ENCODE measurements at regions of chr9 and their contacts with region 1.

Region 1: GRCh38 chr9:22037954-22038690 is 29.0 kb upstream of the CDKN2B start:
- DNase-seq: peak; percentile 57
- H3K4me3 ChIP-seq: no peak overlapping the region
- H3K27ac ChIP-seq: peak overlapping the region; percentile 91
- H3K4me1 ChIP-seq: peaks cover 75% of the 10 kb centered on the region
- H3K27me3 ChIP-seq: no peaks in the 10 kb centered on the region
- CTCF ChIP-seq: peak; percentile 42 to 62

Region 2: DNA sequence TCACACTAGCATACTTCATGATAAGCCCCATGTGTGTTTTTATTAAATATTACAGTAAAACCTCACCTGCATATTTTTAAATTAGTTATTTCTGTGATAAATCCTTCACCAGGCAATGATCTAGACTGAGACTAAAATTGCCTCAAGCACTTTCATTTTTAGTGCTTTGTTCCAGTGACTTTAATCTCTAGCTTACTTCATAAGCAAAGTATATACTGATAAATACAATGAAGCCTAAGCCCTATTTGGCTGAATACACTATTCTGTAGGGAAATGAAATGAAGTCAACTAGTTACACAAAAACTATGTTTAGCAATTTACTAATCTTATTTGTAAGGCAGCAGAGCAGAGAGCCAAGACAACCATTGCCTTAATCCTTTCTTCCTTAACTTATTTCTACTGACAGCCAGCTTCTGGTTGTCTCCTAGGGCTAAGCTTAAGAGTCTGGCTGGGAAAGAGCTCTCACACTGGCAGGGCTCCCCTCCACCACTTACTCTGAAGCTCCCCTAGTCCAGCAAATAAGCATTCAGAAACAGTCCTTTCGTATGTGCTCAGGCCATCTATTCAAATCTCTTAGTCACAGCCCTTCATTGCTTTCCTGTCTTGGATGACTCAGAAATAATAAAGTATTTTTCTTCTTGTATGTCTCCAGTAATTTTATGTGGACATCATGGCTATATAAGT is 267.1 kb before region 1 on chr9:
- CTCF ChIA-PET with region 1: no interaction called
- dilution Hi-C with region 1: no loop called
- in situ Hi-C with region 1: no loop called
- intact Hi-C with region 1: no loop called
- DNase-seq: peak; percentile 83
- H3K4me3 ChIP-seq: no peak overlapping the region
- H3K27ac ChIP-seq: peak overlapping the region; percentile 84
- H3K4me1 ChIP-seq: peaks cover 18% of the 10 kb centered on the region
- H3K27me3 ChIP-seq: no peaks in the 10 kb centered on the region
- CTCF ChIP-seq: no peak

Region 3: GRCh38 chr9:21974548-21975409 is 63.3 kb before region 1 on chr9:
- CTCF ChIA-PET with region 1: no interaction called
- dilution Hi-C with region 1: loop called (anchors 5 kb)
- in situ Hi-C with region 1: no loop called
- intact Hi-C with region 1: no loop called
- DNase-seq: no peak
- H3K4me3 ChIP-seq: peak overlapping the region in 2 of 3 experiments; percentile 3 to 14
- H3K27ac ChIP-seq: no peak overlapping the region
- H3K4me1 ChIP-seq: peaks cover 4% of the 10 kb centered on the region
- H3K27me3 ChIP-seq: no peaks in the 10 kb centered on the region
- CTCF ChIP-seq: no peak

Region 4: GRCh38 chr9:22079873-22080341 is 41.8 kb after region 1 on chr9:
- CTCF ChIA-PET with region 1: no interaction called
- dilution Hi-C with region 1: no loop called
- in situ Hi-C with region 1: no loop called
- intact Hi-C with region 1: loop called (anchors 2 kb)
- DNase-seq: peak; percentile 93
- H3K4me3 ChIP-seq: no peak overlapping the region
- H3K27ac ChIP-seq: peak overlapping the region; percentile 39
- H3K4me1 ChIP-seq: peaks cover 25% of the 10 kb centered on the region
- H3K27me3 ChIP-seq: no peaks in the 10 kb centered on the region
- CTCF ChIP-seq: no peak

Region 5: DNA sequence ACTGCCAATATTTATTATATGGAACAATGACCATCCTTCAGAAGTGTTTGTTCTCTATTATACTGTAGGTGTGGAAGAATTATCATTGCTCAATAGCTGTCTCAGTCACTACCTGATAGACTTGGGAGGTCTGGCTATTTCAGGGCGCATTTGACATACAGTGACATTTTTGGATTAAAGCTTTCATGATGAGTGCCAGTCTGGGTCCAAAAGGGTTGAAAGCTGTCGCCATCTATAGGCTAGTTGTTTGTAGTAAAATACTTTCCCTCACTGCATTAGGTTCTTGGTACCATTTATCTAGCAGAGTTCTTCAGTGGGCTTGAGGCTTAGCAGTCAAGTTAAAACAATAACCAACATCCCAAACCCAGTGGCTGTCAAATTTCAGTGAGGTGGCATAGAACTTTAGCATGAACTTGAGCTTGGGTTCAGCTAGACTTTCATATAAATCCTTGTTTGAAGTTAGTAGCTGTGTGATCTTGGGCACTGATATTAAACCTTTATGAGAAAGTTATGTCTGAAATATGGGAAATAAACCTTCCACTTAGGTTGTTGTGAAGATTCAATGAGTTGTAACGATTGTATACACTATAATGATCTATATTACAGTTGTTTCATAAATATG is 81.5 kb after region 1 on chr9:
- CTCF ChIA-PET with region 1: no interaction called
- dilution Hi-C with region 1: loop called (anchors 5 kb)
- in situ Hi-C with region 1: no loop called
- intact Hi-C with region 1: loop called (anchors 2 kb)
- DNase-seq: peak; percentile 59
- H3K4me3 ChIP-seq: no peak overlapping the region
- H3K27ac ChIP-seq: no peak overlapping the region
- H3K4me1 ChIP-seq: peaks cover 28% of the 10 kb centered on the region
- H3K27me3 ChIP-seq: no peaks in the 10 kb centered on the region
- CTCF ChIP-seq: peak; percentile 65 to 71

Region 6: DNA sequence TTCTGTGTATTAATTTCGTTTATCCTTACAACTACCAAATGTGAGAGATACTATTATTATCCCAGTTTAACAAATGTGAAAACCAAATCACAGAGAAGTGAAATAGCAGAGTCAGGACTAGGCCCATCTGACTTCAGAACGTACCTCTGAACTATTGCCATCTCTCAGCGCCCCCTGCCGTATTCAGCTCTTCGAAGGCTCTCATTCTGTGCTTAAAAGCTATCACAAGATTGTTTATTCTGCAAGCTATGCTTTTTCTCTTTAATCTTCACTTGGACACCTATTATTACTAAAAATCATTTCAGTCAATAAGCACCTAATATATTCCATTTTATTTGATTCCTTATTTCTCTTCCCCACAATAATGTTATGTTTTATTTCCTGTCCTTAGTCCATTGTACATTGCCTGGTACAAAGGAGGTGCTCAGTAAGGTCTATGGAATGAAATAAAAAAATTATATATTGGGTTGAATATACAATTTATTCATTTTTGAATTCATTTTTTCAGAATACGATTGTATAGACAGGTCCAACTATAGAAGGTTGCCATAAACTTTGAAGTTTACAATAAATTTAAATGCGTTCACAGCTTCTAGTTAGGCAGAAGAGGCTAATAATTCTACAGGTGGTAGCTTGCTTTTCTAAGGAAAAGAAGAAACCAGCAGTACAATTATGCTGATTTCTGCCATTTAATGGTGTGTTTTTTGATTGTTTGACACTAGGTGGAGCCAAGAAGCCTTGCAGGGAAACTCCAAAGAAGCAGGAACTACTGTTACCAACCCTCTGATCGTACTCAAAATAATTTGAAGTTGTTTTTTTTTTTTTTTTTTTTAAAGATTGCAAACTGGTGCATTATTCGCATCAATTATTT is 206.3 kb after region 1 on chr9:
- CTCF ChIA-PET with region 1: interaction called, 3 read pairs
- dilution Hi-C with region 1: loop called (anchors 25 kb)
- in situ Hi-C with region 1: loop called in 1 of 2 experiments (anchors 10 kb)
- intact Hi-C with region 1: loop called (anchors 2 kb)
- DNase-seq: peak; percentile 58
- H3K4me3 ChIP-seq: peak overlapping the region in 1 of 3 experiments; percentile 19
- H3K27ac ChIP-seq: no peak overlapping the region
- H3K4me1 ChIP-seq: peaks cover 30% of the 10 kb centered on the region
- H3K27me3 ChIP-seq: no peaks in the 10 kb centered on the region
- CTCF ChIP-seq: peak; percentile 59 to 77